AG04449 (cell line): ENCODE measurements at regions of chr1 and their contacts with region 1.

Region 1: DNA sequence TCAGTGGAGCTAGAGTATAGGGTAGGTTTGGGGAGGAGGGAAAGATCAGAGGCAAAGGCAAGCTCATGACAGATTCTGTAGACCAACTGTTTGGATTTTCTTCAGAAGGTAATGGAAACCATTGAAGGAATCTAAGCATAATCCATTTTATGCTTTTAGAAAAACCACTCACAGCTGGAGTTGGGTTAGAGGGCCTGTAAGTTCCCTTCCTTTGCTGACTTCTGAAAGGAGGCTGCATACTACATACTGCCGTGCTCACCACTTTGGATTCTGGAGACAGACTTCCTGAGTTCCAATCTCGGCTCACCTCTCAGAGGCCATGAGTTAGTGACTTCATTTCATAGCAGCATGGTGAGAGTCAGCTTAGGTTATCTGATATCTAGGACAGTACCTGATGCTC is 6.4 kb upstream of the SYT2 start:
- DNase-seq: no peak
- H3K4me3 ChIP-seq: no peak overlapping the region
- CTCF ChIP-seq: no peak

Region 2: GRCh38 chr1:202343652-202344349 is 372.9 kb before region 1 on chr1:
- CTCF ChIA-PET with region 1: interaction called, 68 read pairs
- POLR2A ChIA-PET with region 1: no interaction called
- DNase-seq: no peak
- H3K4me3 ChIP-seq: no peak overlapping the region
- CTCF ChIP-seq: peak; percentile 45

Region 3: DNA sequence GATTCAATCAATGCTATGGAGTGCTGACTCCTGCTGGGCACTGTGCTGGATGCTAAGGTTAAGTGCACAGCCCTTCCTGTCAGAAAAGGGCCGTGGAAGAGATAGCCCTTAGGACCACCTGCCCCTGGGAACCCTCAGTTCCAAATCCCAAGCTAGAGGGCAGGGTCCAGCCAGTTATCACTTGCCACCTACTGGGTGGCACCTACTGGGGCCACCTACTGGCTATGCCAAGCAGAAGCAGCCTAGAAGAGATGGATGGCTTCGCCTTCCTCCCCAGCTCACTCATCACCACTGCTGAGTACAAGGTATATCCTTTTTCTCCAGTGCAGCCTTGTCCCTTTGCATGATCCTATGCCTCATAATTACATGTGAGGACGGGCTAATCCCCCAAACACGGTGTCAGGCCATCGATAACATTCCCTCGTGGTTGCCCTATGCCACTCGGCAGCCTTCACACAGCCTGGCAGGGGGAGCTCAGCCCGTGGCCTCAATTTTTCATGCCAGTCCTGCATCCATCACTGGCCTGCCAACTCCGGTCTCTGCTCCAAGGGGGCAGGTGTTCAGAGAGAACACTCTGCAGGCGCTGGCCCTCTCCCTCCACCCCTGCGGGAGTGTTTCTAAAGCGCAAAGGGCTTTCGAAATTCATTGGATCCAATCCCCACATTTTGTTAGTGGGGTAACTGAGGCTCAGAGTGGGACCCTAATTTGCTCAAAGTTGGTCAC is 55.4 kb before region 1 on chr1:
- CTCF ChIA-PET with region 1: interaction called, 10 read pairs
- POLR2A ChIA-PET with region 1: no interaction called
- DNase-seq: no peak
- H3K4me3 ChIP-seq: no peak overlapping the region
- CTCF ChIP-seq: peak; percentile 10

Region 4: GRCh38 chr1:202728951-202729350 is 12.3 kb after region 1 on chr1:
- CTCF ChIA-PET with region 1: interaction called, 18 read pairs
- POLR2A ChIA-PET with region 1: no interaction called
- DNase-seq: no peak
- H3K4me3 ChIP-seq: no peak overlapping the region
- CTCF ChIP-seq: no peak